ENCODE measurements at regions of chr6 and their contacts with region 1.

Region 1: GRCh38 chr6:131929264-131929663 is 21.9 kb downstream of the CCN2 start:
- DNase-seq: no peak
- H3K4me3 ChIP-seq: no peak overlapping the region
- H3K27ac ChIP-seq: no peak overlapping the region
- H3K4me1 ChIP-seq: 0 out of 7 replicates have a peak, but pooled peaks cover 0 to 2% (median 0%) of the 10 kb centered on the region in 4 experiments
- H3K27me3 ChIP-seq: no peaks in the 10 kb centered on the region
- CTCF ChIP-seq: peak; percentile 60 to 77 (median 72)
- EP300 ChIP-seq: no peak
- POLR2A ChIP-seq: no peak
- RAD21 ChIP-seq: peak in 1 of 2 experiments; percentile 35; a peak in 2 of 4 replicates

Region 2: DNA sequence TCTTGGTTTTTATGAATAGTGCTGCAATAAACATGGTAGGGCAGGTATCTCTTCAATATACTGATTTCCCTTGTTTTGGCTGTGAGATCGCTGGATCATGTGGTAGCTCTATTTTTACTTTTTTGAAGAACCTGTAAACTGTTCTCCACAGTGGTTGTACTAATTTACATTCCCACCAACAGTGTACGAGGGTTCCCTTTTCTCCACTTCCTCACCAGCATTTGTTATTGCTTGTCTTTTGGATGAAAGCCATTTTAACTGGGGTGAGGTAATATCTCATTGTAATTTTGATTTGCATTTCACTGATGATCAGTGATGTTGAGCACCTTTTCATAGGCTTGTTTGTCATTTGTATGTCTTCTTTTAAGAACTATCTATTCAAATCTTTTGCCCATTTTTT is 364.2 kb before region 1 on chr6:
- CTCF ChIA-PET with region 1: no interaction called
- POLR2A ChIA-PET with region 1: no interaction called
- DNase-seq: no peak
- H3K4me3 ChIP-seq: no peak overlapping the region
- H3K27ac ChIP-seq: no peak overlapping the region
- H3K4me1 ChIP-seq: no peaks in the 10 kb centered on the region
- H3K27me3 ChIP-seq: no peaks in the 10 kb centered on the region
- CTCF ChIP-seq: no peak
- EP300 ChIP-seq: no peak
- POLR2A ChIP-seq: no peak
- RAD21 ChIP-seq: no peak

Region 3: DNA sequence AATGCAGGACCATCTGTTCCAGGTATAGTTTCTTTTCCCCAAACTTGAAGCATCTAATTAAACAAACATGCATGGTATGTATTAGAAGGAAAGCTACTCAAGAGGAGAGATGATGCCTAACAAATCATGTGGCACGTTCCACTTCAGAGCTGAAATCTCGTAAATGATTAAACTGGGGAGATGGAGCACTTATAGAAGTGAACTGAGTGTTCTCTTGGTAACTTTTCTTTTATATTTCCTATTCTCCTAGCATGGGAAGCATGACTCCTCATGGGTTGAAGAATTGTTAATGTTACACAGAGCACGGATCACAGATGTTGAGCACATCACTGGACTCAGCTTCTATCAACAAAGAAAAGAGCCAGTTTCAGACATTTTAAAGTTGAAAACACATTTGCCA is 39.2 kb before region 1 on chr6:
- CTCF ChIA-PET with region 1: no interaction called
- POLR2A ChIA-PET with region 1: no interaction called
- DNase-seq: no peak
- H3K4me3 ChIP-seq: no peak overlapping the region
- H3K27ac ChIP-seq: no peak overlapping the region
- H3K4me1 ChIP-seq: peaks cover 0 to 8% (median 3%) of the 10 kb centered on the region in 4 experiments; a peak in 3 of 7 replicates
- H3K27me3 ChIP-seq: no peaks in the 10 kb centered on the region
- CTCF ChIP-seq: no peak
- EP300 ChIP-seq: no peak
- POLR2A ChIP-seq: no peak
- RAD21 ChIP-seq: no peak

Region 4: DNA sequence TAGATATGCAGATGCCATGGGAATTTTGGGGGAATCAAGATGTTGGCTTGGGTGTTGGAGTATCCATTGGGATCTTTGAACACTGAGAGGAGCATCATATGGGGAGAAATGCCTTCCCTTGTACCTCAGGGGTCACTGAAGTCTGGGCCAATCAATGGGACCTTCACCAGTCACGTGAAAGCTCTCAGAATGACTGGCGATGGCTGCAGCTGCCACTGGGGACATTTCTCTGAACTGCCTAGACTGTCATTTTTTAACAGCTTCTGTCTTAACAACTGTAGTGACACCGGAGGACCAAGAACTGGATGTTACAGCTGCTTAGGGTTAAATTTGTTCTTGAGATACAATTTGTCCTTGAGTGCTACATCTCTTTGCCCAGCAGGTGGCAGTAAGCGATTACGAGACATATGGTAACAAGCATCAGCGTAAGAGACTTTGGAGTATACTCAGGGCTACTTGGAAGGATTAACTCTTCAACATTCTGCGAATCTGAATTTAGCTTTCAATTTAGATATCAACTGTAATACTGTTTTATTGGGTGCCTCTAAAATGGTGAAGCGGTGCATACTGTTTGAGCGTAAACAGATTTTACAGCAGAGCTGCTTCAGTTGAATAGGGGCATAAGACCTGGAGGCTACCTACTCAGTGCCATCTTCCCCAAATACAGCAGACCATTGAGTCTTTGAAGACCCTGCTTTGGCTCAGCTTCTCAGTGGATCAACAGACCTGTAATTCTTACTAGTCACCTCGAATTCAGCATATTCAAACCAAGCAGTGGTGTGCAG is 14.1 kb before region 1 on chr6:
- CTCF ChIA-PET with region 1: interaction called, 72 read pairs
- POLR2A ChIA-PET with region 1: interaction called, 14 read pairs
- DNase-seq: no peak
- H3K4me3 ChIP-seq: no peak overlapping the region
- H3K27ac ChIP-seq: no peak overlapping the region
- H3K4me1 ChIP-seq: no peaks in the 10 kb centered on the region
- H3K27me3 ChIP-seq: no peaks in the 10 kb centered on the region
- CTCF ChIP-seq: peak in 2 of 3 experiments; percentile 48 to 71; a peak in 3 of 4 replicates
- EP300 ChIP-seq: no peak
- POLR2A ChIP-seq: peak; percentile 19 to 84; a peak in 2 of 3 replicates
- RAD21 ChIP-seq: peak; percentile 49 to 64